GM12878 (cell line): ENCODE measurements at regions of chr3 and their contacts with region 1.

Region 1: DNA sequence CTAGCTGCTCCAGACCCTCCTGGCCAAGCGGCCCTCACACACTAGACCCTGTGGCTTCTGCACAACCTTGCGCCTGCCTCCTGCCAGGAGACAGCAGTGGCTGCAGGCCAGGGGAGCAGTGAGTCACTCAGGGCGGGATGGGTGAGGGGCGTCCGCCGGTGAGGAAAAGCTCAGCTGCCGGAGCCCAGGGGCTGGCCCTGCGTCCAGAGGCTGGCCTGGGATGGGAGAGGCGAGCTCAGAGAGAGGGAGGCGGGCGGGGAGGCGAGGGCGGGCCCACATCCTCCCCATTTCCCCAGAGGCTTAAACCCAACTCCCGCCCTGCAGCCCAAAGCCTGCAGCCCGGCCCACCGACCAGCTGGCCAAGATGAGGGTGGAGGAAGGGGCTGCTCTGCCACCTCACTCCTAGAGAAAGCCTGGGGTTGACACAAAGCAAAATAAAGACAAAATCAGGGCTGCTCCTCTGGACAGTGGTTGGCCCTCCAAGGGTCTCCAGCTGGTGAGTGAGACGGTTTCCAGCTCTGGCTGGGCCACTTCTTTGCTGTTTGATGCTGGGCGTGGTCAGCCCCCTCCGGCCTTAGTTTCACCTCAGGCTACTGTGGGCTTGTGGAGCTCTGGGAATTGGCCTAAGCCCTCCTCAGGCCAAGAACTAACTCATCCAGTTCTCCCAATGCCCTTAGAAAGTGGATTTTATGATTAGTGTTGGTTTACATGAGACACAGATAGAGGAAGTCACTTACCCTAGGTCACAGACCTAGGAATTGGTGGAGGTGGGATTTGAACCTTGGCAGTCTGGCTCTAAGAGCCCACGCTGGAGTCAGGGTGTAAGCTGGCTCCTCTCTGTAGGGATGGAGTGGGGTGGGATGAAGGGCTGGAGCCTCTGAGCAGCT is 50.6 kb downstream of the IQSEC1 start:
- DNase-seq: no peak
- ATAC-seq: peak; percentile 72
- H3K4me3 ChIP-seq: peak overlapping the region; percentile 70
- H3K27ac ChIP-seq: peak overlapping the region; percentile 99
- H3K4me1 ChIP-seq: peaks cover 32% of the 10 kb centered on the region
- H3K27me3 ChIP-seq: no peaks in the 10 kb centered on the region
- CTCF ChIP-seq: no peak
- EP300 ChIP-seq: no peak
- POLR2A ChIP-seq: no peak
- RAD21 ChIP-seq: no peak

Region 2: DNA sequence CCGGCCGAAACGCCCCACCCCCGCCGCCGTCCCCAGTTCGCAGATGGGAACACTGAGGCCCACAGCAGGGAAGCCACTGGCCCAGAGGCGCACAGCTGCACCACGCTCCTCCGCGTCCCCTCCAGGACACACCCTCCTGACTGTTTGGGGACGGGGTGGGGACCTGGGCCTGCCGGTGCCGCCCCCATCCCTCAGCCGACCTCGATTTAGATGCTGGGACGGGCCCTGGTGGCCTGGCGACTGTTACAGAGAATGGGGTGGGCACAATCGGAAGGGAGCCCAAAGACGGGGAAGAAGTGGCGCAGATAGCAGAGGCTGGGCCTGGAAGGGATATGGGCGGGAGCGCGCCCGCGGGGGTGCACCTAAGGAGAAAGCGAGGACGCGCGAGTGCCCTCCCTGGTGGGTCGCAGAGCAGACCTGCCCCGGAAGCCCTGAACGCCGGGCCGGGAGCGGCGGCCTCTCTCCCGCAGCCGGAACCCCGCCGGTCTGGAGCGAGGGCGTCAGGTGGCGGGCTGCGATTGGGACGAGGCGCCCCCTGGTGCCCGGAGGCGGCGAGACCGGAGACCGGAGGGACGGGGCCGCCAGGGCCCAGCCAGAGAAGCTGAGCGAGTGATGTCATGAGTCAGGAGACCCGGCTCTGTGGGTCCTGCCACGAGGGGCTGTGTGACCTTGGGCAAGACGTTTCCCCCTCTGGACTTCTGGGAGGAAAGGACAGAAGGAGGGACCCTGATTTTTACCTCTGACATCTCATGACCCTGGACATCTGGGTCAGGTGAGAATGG is 27.8 kb before region 1 on chr3:
- CTCF ChIA-PET with region 1: interaction called, 11 read pairs
- POLR2A ChIA-PET with region 1: interaction called, 20 read pairs
- RAD21 ChIA-PET with region 1: interaction called, 10 read pairs
- SMC1A ChIA-PET with region 1: interaction called, 7 read pairs
- in situ Hi-C with region 1: no loop called
- intact Hi-C with region 1: loop called (anchors 2 kb)
- DNase-seq: no peak
- ATAC-seq: peak; percentile 90
- H3K4me3 ChIP-seq: peak overlapping the region; percentile 89
- H3K27ac ChIP-seq: peak overlapping the region; percentile 79
- H3K4me1 ChIP-seq: peaks cover 34% of the 10 kb centered on the region
- H3K27me3 ChIP-seq: no peaks in the 10 kb centered on the region
- CTCF ChIP-seq: peak; percentile 87 to 90 (median 90)
- EP300 ChIP-seq: no peak
- POLR2A ChIP-seq: peak; percentile 75
- RAD21 ChIP-seq: peak; percentile 61

Region 3: GRCh38 chr3:13040361-13041074 is 17.9 kb after region 1 on chr3:
- CTCF ChIA-PET with region 1: interaction called, 21 read pairs
- POLR2A ChIA-PET with region 1: interaction called, 58 read pairs
- RAD21 ChIA-PET with region 1: interaction called, 22 read pairs
- SMC1A ChIA-PET with region 1: interaction called, 34 read pairs
- in situ Hi-C with region 1: no loop called
- intact Hi-C with region 1: no loop called
- DNase-seq: no peak
- ATAC-seq: peak; percentile 99
- H3K4me3 ChIP-seq: no peak overlapping the region
- H3K27ac ChIP-seq: no peak overlapping the region
- H3K4me1 ChIP-seq: peaks cover 23% of the 10 kb centered on the region
- H3K27me3 ChIP-seq: no peaks in the 10 kb centered on the region
- CTCF ChIP-seq: no peak
- EP300 ChIP-seq: no peak
- POLR2A ChIP-seq: no peak
- RAD21 ChIP-seq: no peak

Region 4: GRCh38 chr3:13073326-13074005 is 50.9 kb after region 1 on chr3 and contains the start of gene IQSEC1:
- CTCF ChIA-PET with region 1: no interaction called
- POLR2A ChIA-PET with region 1: interaction called, 6 read pairs
- RAD21 ChIA-PET with region 1: interaction called, 28 read pairs
- SMC1A ChIA-PET with region 1: interaction called, 12 read pairs
- in situ Hi-C with region 1: no loop called
- intact Hi-C with region 1: no loop called
- DNase-seq: no peak
- ATAC-seq: peak; percentile 67
- H3K4me3 ChIP-seq: peak within 1 kb of the TSS; percentile 77
- H3K27ac ChIP-seq: no peak within 1 kb of the TSS
- H3K4me1 ChIP-seq: peaks cover 45% of the 10 kb centered on the region
- H3K27me3 ChIP-seq: peaks cover 0 to 11% of the 10 kb centered on the region in 2 experiments; a peak in 2 of 4 replicates
- CTCF ChIP-seq: 0 out of 6 replicates have a peak, but pooled peaks of 2 of the 3 experiments have one; percentile 1 to 3
- EP300 ChIP-seq: no peak
- POLR2A ChIP-seq: no peak
- RAD21 ChIP-seq: no peak
- polyA plus RNA-seq, gene IQSEC1: 0.92 to 2.0 TPM